Heart left ventricle (tissue), 16 donors: ENCODE measurements at regions of chr13 and their contacts with region 1.

Region 1: DNA sequence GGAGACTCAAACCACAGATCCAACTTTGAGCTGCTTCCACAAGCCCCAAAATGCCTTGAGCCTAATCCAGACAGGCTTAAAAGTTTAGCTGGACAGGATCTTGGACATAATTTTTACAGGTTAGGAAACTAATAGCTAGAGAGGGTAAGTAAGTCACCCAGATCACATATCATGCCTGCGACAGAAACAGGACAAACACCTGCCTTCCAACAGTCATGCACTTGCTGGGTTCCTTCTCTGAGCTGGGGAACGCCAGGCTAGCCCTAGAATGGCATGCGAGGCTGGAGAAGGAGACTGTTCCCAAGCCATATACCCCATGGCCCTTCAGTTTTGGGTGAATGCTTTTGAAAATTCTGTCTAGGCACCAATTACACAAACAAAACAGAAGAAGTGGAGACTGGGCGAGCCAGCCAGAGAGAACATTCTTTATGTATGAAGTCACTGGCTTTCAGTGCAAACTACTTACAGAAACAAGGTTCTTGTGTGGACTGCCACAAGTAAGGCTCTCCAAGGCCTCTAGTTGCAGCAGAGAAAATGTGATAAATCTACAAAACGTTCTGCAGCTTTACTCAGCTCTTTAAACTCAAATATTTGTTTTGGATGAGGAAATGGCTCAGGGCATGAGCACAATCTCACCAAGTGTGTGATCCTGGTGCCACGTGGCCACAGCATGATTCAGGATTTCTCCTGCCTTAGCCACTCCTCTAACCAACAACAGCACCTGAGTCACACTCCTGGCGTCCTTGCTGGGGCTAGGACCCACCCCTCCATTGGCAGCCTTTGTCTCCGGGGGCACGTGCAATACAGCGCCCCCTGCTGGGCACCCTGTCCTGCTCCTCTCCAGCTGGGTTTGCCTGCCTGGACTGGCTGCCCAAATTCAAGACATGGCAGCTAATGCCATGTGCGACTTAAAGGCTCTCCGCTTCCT is 73.4 kb upstream of the UBL3 start:
- DNase-seq: peak; percentile 40 to 79 (median 71)
- ATAC-seq: peak; percentile 72 to 84 (median 80)
- H3K4me3 ChIP-seq: no peak overlapping the region
- H3K27ac ChIP-seq: peak overlapping the region in 11 of 12 donors; percentile 28 to 81 (median 56)
- H3K4me1 ChIP-seq: peaks cover 0 to 35% (median 26%) of the 10 kb centered on the region in 12 donors
- H3K27me3 ChIP-seq: no peaks in the 10 kb centered on the region
- CTCF ChIP-seq: peak; percentile 62 to 84 (median 68)
- POLR2A ChIP-seq: no peak

Region 2: DNA sequence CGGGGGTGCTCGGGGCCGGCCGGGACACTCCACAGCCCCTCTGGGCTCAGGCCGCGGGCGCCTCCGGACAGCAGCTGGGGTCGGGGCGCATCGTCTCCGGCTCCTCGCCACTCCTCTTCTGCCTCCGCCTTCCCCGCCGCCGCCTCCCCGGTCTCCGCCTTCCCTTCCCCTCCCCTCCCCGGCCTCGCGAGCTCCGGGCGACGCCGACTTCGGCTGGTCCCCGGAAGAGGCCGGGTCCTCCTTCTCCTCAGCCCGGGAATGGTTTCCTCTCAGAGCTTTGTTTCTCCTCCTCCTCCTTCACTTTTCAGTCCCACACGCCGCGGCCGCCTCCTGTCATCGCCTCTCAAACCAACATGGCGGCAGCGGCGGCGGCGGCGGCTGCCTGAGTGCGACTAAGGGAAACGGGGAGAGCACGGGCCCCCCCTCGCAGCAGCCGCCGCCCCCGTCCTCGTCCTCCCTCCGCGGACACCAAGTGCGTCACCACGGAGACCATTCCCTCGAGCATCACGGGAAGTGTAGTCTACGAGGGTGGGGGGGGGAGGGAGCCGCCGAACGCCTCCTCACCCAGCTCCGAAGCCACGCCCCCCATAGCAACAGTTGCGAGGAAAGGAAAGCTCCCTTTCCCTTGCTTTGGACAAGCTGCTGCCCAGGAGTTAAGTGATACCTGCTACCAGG is 73.5 kb before region 1 on chr13 and contains the start of gene UBL3:
- intact Hi-C with region 1: loop called in 7 of 10 experiments (anchors 2 to 10 kb)
- DNase-seq: peak; percentile 97
- ATAC-seq: peak; percentile 96 to 98 (median 98)
- H3K4me3 ChIP-seq: peak within 1 kb of the TSS; percentile 64 to 96 (median 89)
- H3K27ac ChIP-seq: peak within 1 kb of the TSS; percentile 96 to 99 (median 98)
- H3K4me1 ChIP-seq: peaks cover 0 to 29% (median 19%) of the 10 kb centered on the region in 12 donors
- H3K27me3 ChIP-seq: no peaks in the 10 kb centered on the region
- CTCF ChIP-seq: no peak
- POLR2A ChIP-seq: peak in 1 of 2 donors; percentile 77
- total RNA-seq, gene UBL3: 19.0 to 27.7 (median 21.2) TPM